ENCODE measurements at regions of chr10 and their contacts with region 1.

Region 1: DNA sequence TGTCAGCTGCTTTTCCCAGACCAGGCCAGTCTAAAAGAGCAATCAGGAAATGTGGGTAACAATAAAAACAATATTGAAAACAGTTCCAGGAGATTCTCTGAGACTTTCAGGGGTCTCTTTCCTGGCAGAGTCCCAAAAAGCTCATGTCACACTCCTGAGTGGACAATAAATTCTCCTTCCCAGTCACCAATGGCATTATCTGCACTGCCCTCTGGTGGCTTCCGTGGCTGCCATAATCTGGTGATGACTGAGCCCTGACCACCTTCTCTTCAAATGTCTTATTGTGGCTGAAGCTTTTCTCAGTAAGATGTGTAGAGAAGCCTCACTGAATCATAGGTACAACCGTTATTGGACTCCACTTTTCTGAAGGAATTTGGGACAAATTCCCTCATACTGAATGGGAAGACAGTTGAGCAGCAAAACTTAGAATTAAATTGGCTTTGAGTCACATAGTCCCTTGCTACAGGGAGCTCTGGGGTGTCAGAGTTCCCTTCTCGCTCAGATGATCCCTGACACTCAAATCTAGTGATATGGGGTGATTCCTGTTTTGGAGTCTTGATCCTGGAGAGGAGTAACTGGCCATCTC is 24.4 kb upstream of the ASAH2 start:
- DNase-seq: peak; percentile 86
- ATAC-seq: peak; percentile 87
- H3K4me3 ChIP-seq: no peak overlapping the region
- H3K27ac ChIP-seq: no peak overlapping the region
- H3K4me1 ChIP-seq: peaks cover 6% of the 10 kb centered on the region
- H3K27me3 ChIP-seq: no peaks in the 10 kb centered on the region
- CTCF ChIP-seq: peak; percentile 99

Region 2: GRCh38 chr10:50224330-50224952 is 51.3 kb before region 1 on chr10:
- CTCF ChIA-PET with region 1: no interaction called
- POLR2A ChIA-PET with region 1: no interaction called
- intact Hi-C with region 1: loop called (anchors 1 kb)
- DNase-seq: peak; percentile 99
- ATAC-seq: peak; percentile 99
- H3K4me3 ChIP-seq: no peak overlapping the region
- H3K27ac ChIP-seq: no peak overlapping the region
- H3K4me1 ChIP-seq: peaks cover 6% of the 10 kb centered on the region
- H3K27me3 ChIP-seq: peaks cover 8% of the 10 kb centered on the region; the same call in 1 of the 2 replicates
- CTCF ChIP-seq: peak; percentile 97

Region 3: DNA sequence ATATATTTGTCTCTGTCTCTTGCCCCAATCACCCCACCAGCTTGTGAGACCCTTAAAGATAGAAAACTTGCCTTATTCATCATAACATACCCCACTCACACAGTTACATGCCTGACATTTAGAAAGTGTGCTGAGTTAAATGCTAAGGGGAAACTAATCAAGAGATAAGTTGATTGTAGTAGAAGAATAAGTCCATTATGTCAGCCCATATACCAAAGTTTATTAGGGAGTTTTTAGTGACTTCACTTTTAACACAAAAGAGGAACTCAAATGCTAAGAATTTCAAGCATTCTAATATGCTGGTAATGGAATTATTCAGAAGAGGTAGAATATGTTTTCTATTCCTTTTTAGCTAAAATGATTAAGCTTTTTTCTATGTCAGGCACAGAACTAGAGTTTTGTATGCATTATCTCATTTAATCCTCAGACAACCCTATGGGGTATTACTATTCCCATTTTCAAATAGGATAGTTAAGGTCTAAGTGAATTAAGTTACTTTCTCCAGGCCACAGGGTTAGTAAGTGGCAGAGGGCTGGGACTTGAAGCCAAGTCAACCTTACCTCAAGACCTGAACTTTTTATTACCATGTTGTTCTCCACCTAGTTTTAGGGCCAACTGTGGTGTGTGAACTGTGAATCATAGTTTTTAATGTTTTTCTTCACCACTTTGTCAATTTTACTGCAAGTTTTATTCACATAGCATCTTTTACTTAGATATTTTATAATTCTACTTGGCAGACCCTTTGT is 44.1 kb before region 1 on chr10:
- CTCF ChIA-PET with region 1: no interaction called
- POLR2A ChIA-PET with region 1: no interaction called
- intact Hi-C with region 1: loop called (anchors 2 kb)
- DNase-seq: no peak
- ATAC-seq: peak; percentile 86
- H3K4me3 ChIP-seq: no peak overlapping the region
- H3K27ac ChIP-seq: no peak overlapping the region
- H3K4me1 ChIP-seq: no peaks in the 10 kb centered on the region
- H3K27me3 ChIP-seq: peaks cover 41% of the 10 kb centered on the region
- CTCF ChIP-seq: no peak

Measured in PC-3 (cell line).